Calu3 (cell line): ENCODE measurements at regions of chr12 and their contacts with region 1.

Region 1: DNA sequence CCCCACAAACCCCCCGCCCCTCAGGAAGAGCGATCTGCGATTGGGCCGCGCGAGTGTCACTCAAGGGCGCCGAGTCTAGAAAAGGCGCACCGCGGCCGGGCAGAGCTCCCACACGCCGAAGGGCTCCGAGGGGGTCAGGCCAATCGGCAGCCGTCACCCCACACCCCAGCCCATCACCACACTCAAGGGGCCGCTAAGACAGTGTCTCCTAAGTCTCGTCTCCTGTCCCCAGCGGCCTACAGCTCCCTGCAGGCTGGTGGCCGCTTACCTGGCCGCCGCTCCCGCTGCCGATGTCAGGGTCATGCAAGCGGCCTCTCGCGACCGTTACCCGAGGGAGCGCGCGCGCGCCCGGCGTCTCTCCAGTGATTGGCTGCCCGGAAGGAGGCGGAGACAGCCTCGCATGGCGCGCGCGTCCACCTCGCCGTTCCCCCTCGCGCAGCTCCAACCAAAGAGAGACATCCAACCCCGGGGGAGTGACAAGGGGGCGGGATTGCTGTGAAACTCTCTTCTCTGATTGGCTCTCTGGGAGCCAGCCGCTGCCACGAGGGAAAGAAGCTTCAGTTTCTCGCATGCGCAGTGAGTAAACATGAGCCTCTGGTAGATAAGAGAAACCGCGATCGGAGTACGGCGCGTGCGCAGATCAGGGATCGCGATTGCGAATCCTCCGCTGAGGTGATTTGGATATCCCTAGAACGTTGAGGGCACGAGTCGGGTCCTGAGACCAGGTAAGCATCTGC is at the starts of genes MPHOSPH9 and MTRFR:
- DNase-seq: peak; percentile 99
- H3K4me3 Mint-ChIP-seq: peak within 1 kb of the TSS; percentile 100
- H3K27ac Mint-ChIP-seq: peak within 1 kb of the TSS; percentile 99
- H3K4me1 Mint-ChIP-seq: peaks cover 28% of the 10 kb centered on the region
- H3K27me3 Mint-ChIP-seq: no peaks in the 10 kb centered on the region
- CTCF ChIP-seq: no peak
- total RNA-seq, gene MPHOSPH9: 52.5 and 69.5 TPM in 2 replicates
- total RNA-seq, gene MTRFR: 19.9 and 24.7 TPM in 2 replicates

Region 2: DNA sequence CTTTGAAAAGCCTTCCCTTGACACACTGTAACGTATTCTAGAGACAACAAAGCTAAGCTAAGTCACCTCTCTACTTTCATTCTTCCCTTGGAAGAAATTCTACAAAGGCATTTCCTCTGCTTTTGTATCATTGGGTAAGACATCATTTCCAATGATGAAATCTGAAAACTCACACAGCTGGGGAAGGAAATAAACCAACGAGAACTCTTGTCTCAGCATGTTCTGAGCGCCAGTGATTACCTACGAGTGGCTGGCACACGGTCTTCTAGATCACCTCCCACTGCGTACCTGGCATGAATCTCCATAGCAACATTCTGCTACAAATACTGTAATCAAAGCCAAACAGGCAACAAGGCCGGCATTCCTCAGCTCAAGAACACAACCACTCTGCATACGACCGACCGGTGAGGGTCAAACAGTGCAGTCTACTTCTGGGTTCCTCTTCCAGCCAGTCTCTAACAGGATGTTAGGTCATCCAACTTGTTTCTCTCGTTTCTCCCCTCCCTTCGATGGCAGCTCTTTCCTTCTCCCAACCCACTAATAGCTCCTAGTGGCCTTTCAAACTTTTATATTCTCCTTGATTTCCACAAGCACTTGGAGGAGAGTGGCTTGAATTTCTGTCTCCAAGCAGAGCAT is 344.6 kb before region 1 on chr12:
- CTCF ChIA-PET with region 1: interaction called, 5 read pairs
- intact Hi-C with region 1: loop called (anchors 10 kb)
- DNase-seq: peak; percentile 91
- H3K4me3 Mint-ChIP-seq: peak overlapping the region; percentile 100
- H3K27ac Mint-ChIP-seq: peak overlapping the region; percentile 98
- H3K4me1 Mint-ChIP-seq: peaks cover 81% of the 10 kb centered on the region
- H3K27me3 Mint-ChIP-seq: no peaks in the 10 kb centered on the region
- CTCF ChIP-seq: no peak

Region 3: DNA sequence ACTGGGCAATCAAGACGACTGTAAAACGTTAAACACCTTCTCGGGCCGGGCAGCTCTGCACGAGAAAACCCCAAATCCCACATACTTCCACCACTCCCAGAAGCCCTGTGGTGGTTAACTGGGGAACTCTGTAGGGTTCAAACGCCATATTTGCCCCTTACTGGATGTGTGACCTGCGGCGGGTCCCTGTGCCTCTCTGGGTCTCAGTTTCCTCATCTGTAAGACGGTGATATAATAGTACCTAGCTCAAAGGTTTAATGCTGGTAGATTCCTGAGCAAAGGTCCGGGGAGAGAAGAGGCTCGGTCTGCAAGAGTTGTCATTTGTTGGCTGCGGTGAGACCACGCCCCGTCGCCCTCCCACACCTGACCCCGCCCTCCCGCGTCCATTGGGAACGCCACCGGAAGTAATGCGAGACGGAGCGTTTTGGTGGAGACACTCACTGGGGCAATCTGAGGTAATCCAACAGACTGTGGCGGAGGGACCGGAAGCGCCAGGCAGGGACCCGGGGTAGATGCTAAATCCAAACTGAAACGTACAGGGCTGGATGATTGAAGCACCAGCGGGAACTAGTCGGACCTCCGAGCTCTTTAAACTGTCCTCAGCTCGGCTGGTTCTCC is 258.6 kb before region 1 on chr12:
- CTCF ChIA-PET with region 1: interaction called, 4 read pairs
- intact Hi-C with region 1: loop called (anchors 5 kb)
- DNase-seq: peak; percentile 99
- H3K4me3 Mint-ChIP-seq: peak overlapping the region; percentile 98
- H3K27ac Mint-ChIP-seq: peak overlapping the region; percentile 94
- H3K4me1 Mint-ChIP-seq: no peaks in the 10 kb centered on the region
- H3K27me3 Mint-ChIP-seq: no peaks in the 10 kb centered on the region
- CTCF ChIP-seq: no peak

Region 4: DNA sequence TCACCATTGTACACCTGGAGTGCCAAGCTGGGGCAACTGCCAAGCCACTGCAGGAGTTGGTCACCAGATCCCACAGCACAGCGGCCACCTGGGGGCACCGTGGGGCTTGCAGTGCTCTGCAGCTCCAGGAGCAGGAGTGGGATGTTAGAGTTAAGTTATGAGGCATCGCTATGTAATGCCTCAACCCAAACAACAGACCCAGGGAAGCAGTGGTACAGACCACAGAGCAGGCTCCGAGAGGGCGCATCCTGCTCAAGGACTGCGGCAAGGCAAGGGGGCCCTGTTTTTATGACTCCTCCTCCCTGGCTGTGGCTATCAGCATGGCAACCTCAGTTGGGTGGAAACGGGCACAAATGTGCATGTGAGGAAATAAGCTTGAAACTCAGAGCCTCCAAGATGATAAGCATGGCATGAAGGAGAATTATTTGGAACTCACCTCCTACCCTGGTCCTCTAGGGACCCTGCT is 189.4 kb before region 1 on chr12:
- CTCF ChIA-PET with region 1: interaction called, 44 read pairs
- intact Hi-C with region 1: loop called (anchors 1 kb)
- DNase-seq: peak; percentile 91
- H3K4me3 Mint-ChIP-seq: no peak overlapping the region
- H3K27ac Mint-ChIP-seq: no peak overlapping the region
- H3K4me1 Mint-ChIP-seq: no peaks in the 10 kb centered on the region
- H3K27me3 Mint-ChIP-seq: no peaks in the 10 kb centered on the region
- CTCF ChIP-seq: peak; percentile 60

Region 5: GRCh38 chr12:123163227-123163626 is 69.7 kb before region 1 on chr12:
- CTCF ChIA-PET with region 1: interaction called, 4 read pairs
- intact Hi-C with region 1: loop called (anchors 5 kb)
- DNase-seq: no peak
- H3K4me3 Mint-ChIP-seq: no peak overlapping the region
- H3K27ac Mint-ChIP-seq: peak overlapping the region; percentile 71
- H3K4me1 Mint-ChIP-seq: peaks cover 40% of the 10 kb centered on the region
- H3K27me3 Mint-ChIP-seq: no peaks in the 10 kb centered on the region
- CTCF ChIP-seq: no peak

Region 6: GRCh38 chr12:123250484-123251383 is 17.8 kb after region 1 on chr12:
- CTCF ChIA-PET with region 1: interaction called, 14 read pairs
- intact Hi-C with region 1: no loop called
- DNase-seq: peak; percentile 92
- H3K4me3 Mint-ChIP-seq: peak overlapping the region; percentile 56
- H3K27ac Mint-ChIP-seq: peak overlapping the region; percentile 97
- H3K4me1 Mint-ChIP-seq: peaks cover 25% of the 10 kb centered on the region
- H3K27me3 Mint-ChIP-seq: no peaks in the 10 kb centered on the region
- CTCF ChIP-seq: no peak